ENCODE measurements at regions of chr9 and their contacts with region 1.

Region 1: DNA sequence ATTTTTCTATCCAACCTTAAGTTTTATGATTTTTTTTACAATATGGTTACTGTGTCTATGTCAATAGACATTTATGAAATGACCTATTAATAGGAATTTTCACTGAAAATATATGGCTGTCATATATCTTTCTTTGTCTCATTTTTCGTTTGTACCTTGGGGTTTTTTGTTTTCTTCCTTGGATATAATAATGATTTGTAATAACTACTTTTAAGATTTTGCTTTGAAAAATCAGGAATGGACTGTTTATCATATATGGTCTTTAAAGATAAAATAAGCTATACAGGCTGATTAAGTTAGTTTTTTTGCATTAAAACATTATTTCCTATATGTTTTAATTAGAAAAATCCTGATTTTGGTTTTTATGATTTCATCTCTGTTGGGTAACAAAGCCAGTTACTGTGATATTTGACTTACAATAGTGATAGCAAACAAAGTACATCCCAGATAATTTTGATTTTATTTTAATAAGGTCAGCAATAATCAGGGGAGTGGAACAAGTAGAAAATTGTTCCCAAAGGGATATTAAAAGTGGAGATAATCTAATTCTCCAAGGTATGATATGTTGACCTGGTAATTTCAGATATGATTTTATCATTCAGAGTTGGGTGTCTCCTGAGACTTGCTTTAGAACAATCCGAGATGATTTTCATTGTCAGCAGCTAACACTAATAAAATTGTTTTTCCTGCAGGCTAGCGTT is 10.3 kb downstream of the NR4A3 start:
- DNase-seq: no peak
- ATAC-seq: no peak
- H3K4me3 ChIP-seq: no peak overlapping the region
- H3K27ac ChIP-seq: no peak overlapping the region
- H3K4me1 ChIP-seq: no peaks in the 10 kb centered on the region
- H3K27me3 ChIP-seq: peaks cover 0 to 17% of the 10 kb centered on the region in 2 experiments; a peak in 1 of 5 replicates
- CTCF ChIP-seq: no peak
- EP300 ChIP-seq: no peak
- POLR2A ChIP-seq: no peak
- RAD21 ChIP-seq: no peak

Region 2: GRCh38 chr9:99868845-99869244 is 36.8 kb after region 1 on chr9:
- CTCF ChIA-PET with region 1: no interaction called
- POLR2A ChIA-PET with region 1: no interaction called
- in situ Hi-C with region 1: no loop called
- intact Hi-C with region 1: loop called (anchors 1 kb)
- DNase-seq: no peak
- ATAC-seq: no peak
- H3K4me3 ChIP-seq: no peak overlapping the region
- H3K27ac ChIP-seq: no peak overlapping the region
- H3K4me1 ChIP-seq: no peaks in the 10 kb centered on the region
- H3K27me3 ChIP-seq: no peaks in the 10 kb centered on the region
- CTCF ChIP-seq: no peak
- EP300 ChIP-seq: no peak
- POLR2A ChIP-seq: no peak
- RAD21 ChIP-seq: no peak

Region 3: GRCh38 chr9:99881769-99882168 is 49.8 kb after region 1 on chr9:
- CTCF ChIA-PET with region 1: no interaction called
- POLR2A ChIA-PET with region 1: no interaction called
- in situ Hi-C with region 1: no loop called
- intact Hi-C with region 1: no loop called
- DNase-seq: no peak
- ATAC-seq: no peak
- H3K4me3 ChIP-seq: no peak overlapping the region
- H3K27ac ChIP-seq: no peak overlapping the region
- H3K4me1 ChIP-seq: no peaks in the 10 kb centered on the region
- H3K27me3 ChIP-seq: no peaks in the 10 kb centered on the region
- CTCF ChIP-seq: no peak
- EP300 ChIP-seq: no peak
- POLR2A ChIP-seq: no peak
- RAD21 ChIP-seq: no peak

Measured in HepG2 (cell line).